ENCODE measurements at regions of chr3 and their contacts with region 1.

Region 1: DNA sequence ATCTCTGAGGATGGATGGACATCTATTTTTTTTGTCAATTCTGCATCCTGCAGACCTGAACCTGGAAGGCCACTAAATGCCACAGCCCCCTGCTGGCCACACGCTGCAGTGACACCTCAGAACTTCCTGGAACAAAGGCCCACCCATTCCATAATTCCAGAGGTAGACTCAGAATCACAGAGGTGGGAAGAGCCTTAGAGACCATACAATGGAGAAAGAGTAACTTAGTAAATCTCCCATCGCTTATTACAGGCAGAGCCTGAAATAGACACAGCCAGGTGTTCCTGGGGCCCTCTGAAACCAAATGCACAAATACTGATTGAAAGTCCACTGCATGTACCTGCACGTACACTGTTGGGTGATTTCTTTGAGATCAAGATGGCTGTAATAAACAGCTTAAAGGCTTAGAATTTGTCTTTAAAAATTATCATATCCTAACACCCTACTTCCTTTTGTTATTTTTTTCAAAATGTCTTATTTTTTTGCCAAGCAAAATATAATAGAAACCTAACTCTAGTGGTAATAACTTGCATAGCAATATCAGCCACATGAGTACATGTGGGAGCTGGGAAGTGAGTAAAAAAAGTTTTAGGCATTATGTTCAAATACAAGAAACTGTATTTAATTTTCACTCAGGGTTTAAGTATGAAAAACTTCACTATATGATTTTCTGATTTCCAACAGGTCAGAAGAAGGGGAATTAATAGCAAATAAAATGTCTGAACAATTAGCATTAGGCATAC is 62.7 kb downstream of the EOMES start:
- DNase-seq: peak; percentile 65
- ATAC-seq: peak; percentile 56

Region 2: GRCh38 chr3:27368831-27369607 is 290.4 kb before region 1 on chr3 and contains the start of gene NEK10:
- intact Hi-C with region 1: loop called (anchors 10 kb)
- DNase-seq: peak; percentile 93
- ATAC-seq: peak; percentile 99
- total RNA-seq, gene NEK10: 9.8 TPM

Region 3: DNA sequence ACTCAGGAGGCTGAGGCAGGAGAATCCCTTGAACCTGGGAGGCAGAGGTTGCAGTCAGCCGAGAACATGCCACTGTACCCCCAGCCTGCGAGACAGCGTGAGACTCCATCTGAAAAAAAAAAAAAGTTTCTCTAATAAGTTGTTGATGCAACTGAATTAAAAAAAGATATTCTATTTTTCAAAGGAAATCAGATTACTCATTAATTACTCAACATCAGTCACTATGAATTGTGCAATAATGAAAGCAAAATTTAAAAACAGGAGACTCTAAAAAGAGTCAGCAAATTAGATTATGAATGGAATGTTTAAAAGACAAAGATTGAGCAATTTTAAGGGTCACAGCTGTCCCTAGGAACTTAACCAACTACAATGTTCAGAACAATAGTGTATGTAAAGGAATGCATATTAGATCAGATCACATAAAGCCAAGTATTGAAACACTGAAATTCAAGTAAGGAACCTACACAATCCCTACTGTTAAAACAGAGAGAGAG is 115.0 kb before region 1 on chr3:
- intact Hi-C with region 1: loop called (anchors 10 kb)
- DNase-seq: no peak
- ATAC-seq: peak; percentile 63

Region 4: DNA sequence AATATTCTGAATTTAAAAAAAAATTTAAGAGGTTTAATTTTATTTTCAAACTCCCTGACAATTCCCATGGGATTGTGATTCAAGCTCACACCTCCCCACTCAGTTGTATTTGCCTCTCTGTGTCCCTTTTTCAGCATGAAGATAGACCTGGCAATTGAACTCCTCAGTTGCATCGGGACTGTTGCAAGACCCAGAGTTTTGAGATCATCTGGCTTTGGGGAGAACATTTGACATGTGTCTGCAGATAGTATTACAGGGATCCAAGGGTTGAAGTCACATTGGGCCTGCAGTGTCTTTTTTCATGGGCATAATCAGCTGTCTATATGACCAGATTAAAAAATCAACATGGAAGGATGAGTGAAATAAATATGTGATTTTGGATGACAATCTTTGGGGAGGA is 153.8 kb after region 1 on chr3:
- intact Hi-C with region 1: no loop called
- DNase-seq: no peak
- ATAC-seq: no peak

Region 5: GRCh38 chr3:27826448-27826847 is 167.0 kb after region 1 on chr3:
- intact Hi-C with region 1: no loop called
- DNase-seq: no peak
- ATAC-seq: no peak

Measured in Right ventricle myocardium inferior (tissue), 1 donor.